ENCODE measurements at regions of chr1 and their contacts with region 1.

Region 1: GRCh38 chr1:56255516-56256152 is 323.7 kb downstream of the PLPP3 start:
- DNase-seq: peak; percentile 88 to 93
- ATAC-seq: peak; percentile 54 to 89 (median 86)
- H3K4me3 ChIP-seq: no peak overlapping the region
- H3K27ac ChIP-seq: peak overlapping the region; percentile 60
- H3K4me1 ChIP-seq: peaks cover 42% of the 10 kb centered on the region
- H3K27me3 ChIP-seq: no peaks in the 10 kb centered on the region
- CTCF ChIP-seq: no peak

Region 2: DNA sequence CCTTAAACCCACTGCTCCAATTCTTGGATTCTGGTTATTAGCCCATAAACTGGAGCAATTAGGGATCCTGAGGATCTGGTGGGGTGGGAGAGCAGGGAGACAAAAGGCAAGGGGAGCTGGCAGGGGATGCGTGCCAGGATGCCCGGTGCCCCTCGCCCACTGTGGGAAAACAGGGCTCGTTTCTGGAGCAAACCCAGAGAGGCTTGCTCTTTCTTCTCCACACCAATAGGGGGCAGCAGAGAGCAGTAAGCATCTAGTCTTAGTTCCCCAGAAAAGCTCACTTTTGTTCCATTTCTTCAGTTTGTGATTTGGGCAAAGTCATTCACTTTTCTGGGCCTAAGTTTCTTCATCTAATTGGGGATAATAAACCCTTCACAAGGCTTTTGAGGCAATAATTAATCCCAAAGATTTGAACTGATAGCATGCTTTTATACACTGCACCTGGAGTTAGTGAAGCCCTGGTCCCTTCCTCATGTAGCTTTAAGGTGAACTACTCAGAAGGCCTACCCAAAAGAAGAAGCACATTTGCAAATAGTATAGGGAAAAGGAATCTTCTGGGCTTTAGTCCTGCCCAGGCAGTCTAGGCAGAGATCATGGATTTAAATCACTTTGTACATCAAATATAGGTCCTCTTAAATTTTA is 879.9 kb before region 1 on chr1:
- intact Hi-C with region 1: no loop called
- DNase-seq: no peak
- ATAC-seq: peak; percentile 59 to 72 (median 68)
- H3K4me3 ChIP-seq: no peak overlapping the region
- H3K27ac ChIP-seq: no peak overlapping the region
- H3K4me1 ChIP-seq: no peaks in the 10 kb centered on the region
- H3K27me3 ChIP-seq: no peaks in the 10 kb centered on the region
- CTCF ChIP-seq: peak; percentile 92

Region 3: GRCh38 chr1:55702064-55702463 is 553.6 kb before region 1 on chr1:
- intact Hi-C with region 1: loop called in 1 of 2 experiments (anchors 10 kb)
- DNase-seq: no peak
- ATAC-seq: peak in 1 of 4 donors; percentile 47
- H3K4me3 ChIP-seq: no peak overlapping the region
- H3K27ac ChIP-seq: no peak overlapping the region
- H3K4me1 ChIP-seq: no peaks in the 10 kb centered on the region
- H3K27me3 ChIP-seq: no peaks in the 10 kb centered on the region
- CTCF ChIP-seq: peak; percentile 44

Region 4: GRCh38 chr1:55931081-55931940 is 324.3 kb before region 1 on chr1:
- intact Hi-C with region 1: no loop called
- DNase-seq: no peak
- ATAC-seq: no peak
- H3K4me3 ChIP-seq: no peak overlapping the region
- H3K27ac ChIP-seq: no peak overlapping the region
- H3K4me1 ChIP-seq: no peaks in the 10 kb centered on the region
- H3K27me3 ChIP-seq: no peaks in the 10 kb centered on the region
- CTCF ChIP-seq: no peak

Region 5: GRCh38 chr1:56074007-56074651 is 181.5 kb before region 1 on chr1:
- intact Hi-C with region 1: loop called in 1 of 2 experiments (anchors 10 kb)
- DNase-seq: peak; percentile 63 to 65
- ATAC-seq: peak; percentile 54 to 67 (median 62)
- H3K4me3 ChIP-seq: no peak overlapping the region
- H3K27ac ChIP-seq: peak overlapping the region; percentile 83
- H3K4me1 ChIP-seq: peaks cover 26% of the 10 kb centered on the region
- H3K27me3 ChIP-seq: no peaks in the 10 kb centered on the region
- CTCF ChIP-seq: no peak

Region 6: GRCh38 chr1:56339786-56340465 is 84.3 kb after region 1 on chr1:
- intact Hi-C with region 1: loop called in 1 of 2 experiments (anchors 5 kb)
- DNase-seq: no peak
- ATAC-seq: peak; percentile 75 to 89 (median 81)
- H3K4me3 ChIP-seq: no peak overlapping the region
- H3K27ac ChIP-seq: peak overlapping the region; percentile 38
- H3K4me1 ChIP-seq: peaks cover 22% of the 10 kb centered on the region
- H3K27me3 ChIP-seq: no peaks in the 10 kb centered on the region
- CTCF ChIP-seq: no peak

Region 7: GRCh38 chr1:56578963-56579875 is 323.6 kb after region 1 on chr1 and contains the start of gene PLPP3:
- intact Hi-C with region 1: loop called in 1 of 2 experiments (anchors 2 kb)
- DNase-seq: peak; percentile 83 to 93
- ATAC-seq: peak; percentile 87 to 88 (median 88)
- H3K4me3 ChIP-seq: peak within 1 kb of the TSS; percentile 90
- H3K27ac ChIP-seq: peak within 1 kb of the TSS; percentile 91
- H3K4me1 ChIP-seq: peaks cover 39% of the 10 kb centered on the region
- H3K27me3 ChIP-seq: no peaks in the 10 kb centered on the region
- CTCF ChIP-seq: peak; percentile 30
- total RNA-seq, gene PLPP3: 35.5 to 51.0 (median 43.6) TPM

Measured in psoas muscle (tissue), 8 donors.